Naive thymus-derived CD4-positive, alpha-beta T cell (primary cell): ENCODE measurements at regions of chr3 and their contacts with region 1.

Region 1: GRCh38 chr3:4986782-4987537 is 7.7 kb downstream of the BHLHE40 start:
- DNase-seq: peak; percentile 15 to 74 (median 47)
- ATAC-seq: peak; percentile 79
- H3K4me3 ChIP-seq: peak overlapping the region; percentile 45
- H3K4me3 Mint-ChIP-seq: peak overlapping the region; percentile 74 to 90 (median 84)
- H3K27ac ChIP-seq: peak overlapping the region; percentile 44
- H3K27ac Mint-ChIP-seq: peak overlapping the region; percentile 33 to 90 (median 78)
- H3K4me1 ChIP-seq: peaks cover 26 to 47% of the 10 kb centered on the region in 2 donors
- H3K4me1 Mint-ChIP-seq: peaks cover 16 to 59% (median 35%) of the 10 kb centered on the region in 7 donors
- H3K27me3 ChIP-seq: no peaks in the 10 kb centered on the region
- H3K27me3 Mint-ChIP-seq: no peaks in the 10 kb centered on the region

Region 2: DNA sequence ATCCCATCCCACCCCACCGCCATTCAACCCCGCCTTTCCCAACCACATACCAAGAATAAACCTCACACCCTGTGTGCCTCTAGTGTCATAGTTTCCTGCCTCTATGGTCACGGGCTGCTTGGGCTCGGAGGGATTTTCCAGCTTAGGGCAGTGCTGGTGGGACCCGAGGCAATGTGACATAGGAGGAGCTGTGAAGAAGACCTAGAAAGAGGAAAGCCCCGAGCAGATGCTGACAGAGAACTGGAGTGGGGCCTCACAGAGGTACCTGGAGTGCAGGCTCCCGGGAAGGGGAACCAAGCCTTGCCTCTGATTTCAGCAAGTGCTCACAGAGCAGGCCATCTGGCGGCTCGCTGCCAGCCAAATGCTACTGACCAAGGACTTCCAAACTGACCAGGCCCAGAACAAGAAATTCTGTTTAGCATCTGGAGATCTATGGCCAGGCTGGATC is 19.8 kb after region 1 on chr3:
- CTCF ChIA-PET with region 1: no interaction called
- POLR2A ChIA-PET with region 1: no interaction called
- intact Hi-C with region 1: loop called in 1 of 2 experiments (anchors 1 kb)
- DNase-seq: peak in 2 of 9 donors; percentile 22 to 82
- ATAC-seq: peak; percentile 83
- H3K4me3 ChIP-seq: no peak overlapping the region
- H3K4me3 Mint-ChIP-seq: peak overlapping the region in 2 of 10 donors; percentile 42 to 55
- H3K27ac ChIP-seq: no peak overlapping the region
- H3K27ac Mint-ChIP-seq: peak overlapping the region in 5 of 9 donors; percentile 28 to 82 (median 54)
- H3K4me1 ChIP-seq: peaks cover 0 to 39% of the 10 kb centered on the region in 2 donors
- H3K4me1 Mint-ChIP-seq: peaks cover 0 to 67% (median 7%) of the 10 kb centered on the region in 7 donors
- H3K27me3 ChIP-seq: no peaks in the 10 kb centered on the region
- H3K27me3 Mint-ChIP-seq: peaks cover 0 to 8% (median 0%) of the 10 kb centered on the region in 5 donors

Region 3: DNA sequence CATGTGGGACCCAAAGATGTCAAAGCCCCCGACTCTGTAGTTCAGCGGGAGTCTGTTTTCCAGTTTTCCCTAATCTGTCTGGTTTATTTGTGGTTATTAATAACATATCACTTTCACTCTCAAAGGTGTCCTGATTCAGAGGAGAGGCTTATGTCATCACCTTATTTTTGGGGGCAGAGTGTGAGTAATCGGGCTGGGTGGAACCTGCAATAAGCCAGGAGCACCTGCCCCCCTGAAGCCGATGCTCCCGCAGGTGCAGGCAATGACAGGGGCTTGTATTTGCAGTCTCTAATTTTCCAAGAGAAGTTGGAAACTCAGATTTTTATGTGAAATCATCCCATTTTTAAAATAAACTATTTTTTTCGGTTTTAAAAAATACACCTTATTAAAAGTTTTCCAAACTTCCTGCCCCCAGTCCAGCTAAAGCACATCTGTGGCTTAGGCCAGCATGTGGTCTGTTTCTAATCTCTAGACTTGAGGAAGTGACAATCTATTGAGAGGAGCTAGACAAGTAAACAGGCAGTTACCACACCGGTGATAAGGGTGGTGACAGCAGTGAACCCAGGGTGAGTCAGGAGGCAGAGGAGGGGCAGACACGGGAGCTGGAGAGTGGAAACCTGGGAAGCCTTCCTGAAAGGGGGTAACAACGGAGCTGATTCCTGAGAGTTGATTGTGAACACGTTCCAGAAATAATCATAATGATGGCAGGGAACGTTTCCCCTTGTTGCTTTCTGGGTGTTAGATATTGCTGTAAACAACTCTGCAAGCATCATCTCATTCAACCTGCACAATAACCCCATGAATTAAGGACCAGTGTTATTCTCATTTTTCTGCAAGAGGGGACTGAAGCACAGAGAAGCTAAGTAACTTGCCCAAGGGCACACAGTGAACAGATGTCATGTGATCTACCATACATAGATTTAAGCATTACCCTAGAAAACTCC is 29.5 kb after region 1 on chr3:
- CTCF ChIA-PET with region 1: interaction called, 3 read pairs
- POLR2A ChIA-PET with region 1: interaction called, 9 read pairs
- intact Hi-C with region 1: loop called (anchors 1 to 2 kb)
- DNase-seq: no peak
- ATAC-seq: peak; percentile 57
- H3K4me3 ChIP-seq: no peak overlapping the region
- H3K4me3 Mint-ChIP-seq: peak overlapping the region in 1 of 10 donors; percentile 54
- H3K27ac ChIP-seq: no peak overlapping the region
- H3K27ac Mint-ChIP-seq: peak overlapping the region in 6 of 9 donors; percentile 6 to 83 (median 52)
- H3K4me1 ChIP-seq: peaks cover 17 to 45% of the 10 kb centered on the region in 2 donors
- H3K4me1 Mint-ChIP-seq: peaks cover 30 to 88% (median 41%) of the 10 kb centered on the region in 7 donors
- H3K27me3 ChIP-seq: no peaks in the 10 kb centered on the region
- H3K27me3 Mint-ChIP-seq: peaks cover 0 to 5% (median 0%) of the 10 kb centered on the region in 5 donors

Region 4: DNA sequence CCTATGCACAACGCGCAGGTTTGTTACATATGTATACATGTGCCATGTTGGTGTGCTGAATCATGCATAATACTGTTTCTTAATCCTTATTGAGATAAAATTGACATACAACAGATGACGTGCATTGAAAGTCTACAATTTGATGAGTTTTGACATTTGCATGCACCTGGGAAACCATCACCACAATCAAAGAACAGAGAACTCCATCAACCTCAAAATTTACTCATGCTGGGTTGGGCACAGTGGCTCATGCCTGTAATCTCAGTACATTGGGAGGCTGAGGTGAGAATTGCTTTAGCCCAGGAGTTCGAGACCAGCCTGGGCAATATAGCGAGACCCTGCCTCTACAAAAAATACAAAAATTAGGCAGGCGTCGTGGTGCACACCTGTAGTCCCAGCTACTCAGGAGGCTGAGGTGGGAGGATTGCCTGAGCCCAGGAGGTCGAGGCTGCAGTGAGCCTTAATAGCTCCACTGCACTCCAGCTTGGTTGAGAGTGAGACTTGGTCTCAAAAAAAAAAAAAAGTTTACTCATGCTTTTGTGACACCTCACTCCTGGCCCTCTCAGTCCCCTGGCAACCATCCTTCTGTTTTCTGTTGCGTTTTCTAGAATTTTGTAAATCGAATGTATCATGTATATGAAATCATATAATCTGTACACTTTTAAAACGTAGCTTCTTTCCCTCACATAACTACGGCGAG is 48.9 kb after region 1 on chr3:
- CTCF ChIA-PET with region 1: no interaction called
- POLR2A ChIA-PET with region 1: no interaction called
- intact Hi-C with region 1: no loop called
- DNase-seq: no peak
- ATAC-seq: no peak
- H3K4me3 ChIP-seq: no peak overlapping the region
- H3K4me3 Mint-ChIP-seq: no peak overlapping the region
- H3K27ac ChIP-seq: no peak overlapping the region
- H3K27ac Mint-ChIP-seq: peak overlapping the region in 1 of 9 donors; percentile 41
- H3K4me1 ChIP-seq: no peaks in the 10 kb centered on the region
- H3K4me1 Mint-ChIP-seq: peaks cover 0 to 50% (median 5%) of the 10 kb centered on the region in 7 donors
- H3K27me3 ChIP-seq: no peaks in the 10 kb centered on the region
- H3K27me3 Mint-ChIP-seq: peaks cover 0 to 3% (median 0%) of the 10 kb centered on the region in 5 donors